OCI-LY7 (cell line): ENCODE measurements at regions of chr5 and their contacts with region 1.

Region 1: GRCh38 chr5:141412854-141413539 is at the start of gene PCDHGA10:
- DNase-seq: peak; percentile 70
- H3K4me3 ChIP-seq: no peak within 1 kb of the TSS
- H3K27ac ChIP-seq: no peak within 1 kb of the TSS
- H3K4me1 ChIP-seq: no peaks in the 10 kb centered on the region
- CTCF ChIP-seq: peak; percentile 88
- total RNA-seq, gene PCDHGA10: 2.7 and 4.9 TPM in 2 replicates

Region 2: GRCh38 chr5:141359790-141360426 is 53.1 kb before region 1 on chr5 and contains the start of gene PCDHGB2:
- CTCF ChIA-PET with region 1: interaction called, 3 read pairs
- POLR2A ChIA-PET with region 1: no interaction called
- intact Hi-C with region 1: loop called (anchors 5 kb)
- DNase-seq: peak; percentile 85
- H3K4me3 ChIP-seq: peak within 1 kb of the TSS; percentile 65
- H3K27ac ChIP-seq: peak within 1 kb of the TSS; percentile 21
- H3K4me1 ChIP-seq: peaks cover 42% of the 10 kb centered on the region
- CTCF ChIP-seq: peak; percentile 94
- total RNA-seq, gene PCDHGB2: 8.3 and 9.3 TPM in 2 replicates

Region 3: GRCh38 chr5:141387233-141387949 is 25.6 kb before region 1 on chr5 and contains the start of gene PCDHGB4:
- CTCF ChIA-PET with region 1: no interaction called
- POLR2A ChIA-PET with region 1: no interaction called
- intact Hi-C with region 1: loop called (anchors 1 kb)
- DNase-seq: peak; percentile 58
- H3K4me3 ChIP-seq: peak within 1 kb of the TSS; percentile 61
- H3K27ac ChIP-seq: no peak within 1 kb of the TSS
- H3K4me1 ChIP-seq: peaks cover 7% of the 10 kb centered on the region
- CTCF ChIP-seq: peak; percentile 75
- total RNA-seq, gene PCDHGB4: 8.7 and 9.3 TPM in 2 replicates

Region 4: DNA sequence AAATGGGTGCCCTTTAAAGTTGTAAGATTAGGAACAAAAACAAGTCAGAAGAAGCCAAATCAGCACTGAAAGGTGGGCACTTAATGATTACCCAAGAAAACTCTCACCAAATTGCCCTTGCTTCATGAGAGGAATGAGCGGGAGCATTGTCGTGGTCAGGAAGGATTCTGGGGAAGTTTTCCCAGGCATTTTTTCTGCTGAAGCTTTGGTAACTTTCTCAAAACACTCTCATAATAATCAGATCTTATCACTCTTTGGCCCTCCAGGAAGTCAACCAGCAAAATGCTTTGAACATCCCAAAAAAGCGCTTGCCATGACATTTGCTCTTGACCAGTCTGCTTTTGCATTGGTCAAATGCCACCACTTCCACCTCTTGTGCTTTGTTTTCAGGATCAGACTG is 52.4 kb after region 1 on chr5:
- CTCF ChIA-PET with region 1: no interaction called
- POLR2A ChIA-PET with region 1: no interaction called
- intact Hi-C with region 1: no loop called
- DNase-seq: no peak
- H3K4me3 ChIP-seq: no peak overlapping the region
- H3K27ac ChIP-seq: no peak overlapping the region
- H3K4me1 ChIP-seq: no peaks in the 10 kb centered on the region
- CTCF ChIP-seq: no peak

Region 5: GRCh38 chr5:141524604-141525597 is 111.9 kb after region 1 on chr5:
- CTCF ChIA-PET with region 1: no interaction called
- POLR2A ChIA-PET with region 1: interaction called, 3 read pairs
- intact Hi-C with region 1: loop called (anchors 1 kb)
- DNase-seq: peak; percentile 77
- H3K4me3 ChIP-seq: peak overlapping the region; percentile 42
- H3K27ac ChIP-seq: peak overlapping the region; percentile 98
- H3K4me1 ChIP-seq: peaks cover 84% of the 10 kb centered on the region
- CTCF ChIP-seq: peak; percentile 100

Region 6: GRCh38 chr5:141557681-141558136 is 144.7 kb after region 1 on chr5:
- CTCF ChIA-PET with region 1: interaction called, 4 read pairs
- POLR2A ChIA-PET with region 1: no interaction called
- intact Hi-C with region 1: loop called (anchors 1 kb)
- DNase-seq: peak; percentile 86
- H3K4me3 ChIP-seq: no peak overlapping the region
- H3K27ac ChIP-seq: peak overlapping the region; percentile 36
- H3K4me1 ChIP-seq: peaks cover 30% of the 10 kb centered on the region
- CTCF ChIP-seq: peak; percentile 99

Region 7: GRCh38 chr5:141564216-141564692 is 151.3 kb after region 1 on chr5:
- CTCF ChIA-PET with region 1: interaction called, 8 read pairs
- POLR2A ChIA-PET with region 1: interaction called, 6 read pairs
- intact Hi-C with region 1: loop called (anchors 1 kb)
- DNase-seq: peak; percentile 97
- H3K4me3 ChIP-seq: no peak overlapping the region
- H3K27ac ChIP-seq: peak overlapping the region; percentile 54
- H3K4me1 ChIP-seq: peaks cover 8% of the 10 kb centered on the region
- CTCF ChIP-seq: peak; percentile 100

Region 8: GRCh38 chr5:142441616-142442015 is 1028.6 kb after region 1 on chr5:
- CTCF ChIA-PET with region 1: no interaction called
- POLR2A ChIA-PET with region 1: no interaction called
- intact Hi-C with region 1: no loop called
- DNase-seq: no peak
- H3K4me3 ChIP-seq: no peak overlapping the region
- H3K27ac ChIP-seq: no peak overlapping the region
- H3K4me1 ChIP-seq: no peaks in the 10 kb centered on the region
- CTCF ChIP-seq: no peak